BJ (cell line): ENCODE measurements at regions of chr7 and their contacts with region 1.

Region 1: GRCh38 chr7:94295850-94296249 is 98.8 kb upstream of the COL1A2 start:
- DNase-seq: peak; percentile 60
- H3K4me3 ChIP-seq: peak overlapping the region; percentile 41
- H3K27me3 ChIP-seq: no peaks in the 10 kb centered on the region
- CTCF ChIP-seq: peak; percentile 75

Region 2: DNA sequence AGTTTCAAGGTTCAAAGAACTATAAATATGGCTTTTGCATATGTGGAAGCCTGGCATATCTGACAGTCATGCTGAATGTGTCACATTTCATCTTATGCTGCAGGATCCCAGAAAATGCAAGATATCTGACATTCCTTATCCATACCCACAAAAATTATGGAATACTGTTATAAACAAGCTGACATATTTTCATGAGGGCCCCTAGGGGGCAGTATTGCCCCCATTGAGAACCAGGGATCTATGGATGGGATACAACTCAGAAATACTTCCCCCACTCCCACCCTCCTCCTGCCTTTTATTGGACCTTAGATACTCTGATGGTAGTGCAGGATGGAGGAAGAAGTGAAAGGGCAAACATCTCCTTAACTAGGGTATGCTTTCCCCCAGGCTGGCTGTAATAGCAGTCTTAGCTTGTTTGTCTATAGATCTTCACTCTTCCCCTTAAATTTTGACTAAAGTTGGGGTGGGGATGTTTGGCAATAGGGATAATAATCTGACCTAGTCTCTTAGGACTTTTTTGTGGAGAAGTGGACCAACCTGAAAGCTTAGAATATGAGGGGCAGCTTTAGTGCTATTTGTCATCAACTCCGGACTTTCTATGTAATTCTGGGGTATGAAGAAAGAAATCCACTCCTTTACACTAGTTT is 392.9 kb before region 1 on chr7:
- CTCF ChIA-PET with region 1: interaction called, 3 read pairs
- POLR2A ChIA-PET with region 1: interaction called, 10 read pairs
- DNase-seq: no peak
- H3K4me3 ChIP-seq: no peak overlapping the region
- H3K27me3 ChIP-seq: no peaks in the 10 kb centered on the region
- CTCF ChIP-seq: peak; percentile 88

Region 3: GRCh38 chr7:94190599-94191061 is 105.2 kb before region 1 on chr7:
- CTCF ChIA-PET with region 1: no interaction called
- POLR2A ChIA-PET with region 1: no interaction called
- DNase-seq: peak; percentile 88
- H3K4me3 ChIP-seq: no peak overlapping the region
- H3K27me3 ChIP-seq: no peaks in the 10 kb centered on the region
- CTCF ChIP-seq: no peak

Region 4: GRCh38 chr7:94368371-94368791 is 72.5 kb after region 1 on chr7:
- CTCF ChIA-PET with region 1: interaction called, 45 read pairs
- POLR2A ChIA-PET with region 1: interaction called, 57 read pairs
- DNase-seq: peak; percentile 74
- H3K4me3 ChIP-seq: peak overlapping the region; percentile 29
- H3K27me3 ChIP-seq: no peaks in the 10 kb centered on the region
- CTCF ChIP-seq: no peak

Region 5: GRCh38 chr7:94395141-94396036 is 99.5 kb after region 1 on chr7:
- CTCF ChIA-PET with region 1: interaction called, 87 read pairs
- POLR2A ChIA-PET with region 1: interaction called, 166 read pairs
- DNase-seq: no peak
- H3K4me3 ChIP-seq: peak overlapping the region; percentile 67
- H3K27me3 ChIP-seq: no peaks in the 10 kb centered on the region
- CTCF ChIP-seq: peak; percentile 66

Region 6: GRCh38 chr7:94414481-94414880 is 118.6 kb after region 1 on chr7:
- CTCF ChIA-PET with region 1: interaction called, 28 read pairs
- POLR2A ChIA-PET with region 1: interaction called, 13 read pairs
- DNase-seq: no peak
- H3K4me3 ChIP-seq: no peak overlapping the region
- H3K27me3 ChIP-seq: no peaks in the 10 kb centered on the region
- CTCF ChIP-seq: no peak

Region 7: DNA sequence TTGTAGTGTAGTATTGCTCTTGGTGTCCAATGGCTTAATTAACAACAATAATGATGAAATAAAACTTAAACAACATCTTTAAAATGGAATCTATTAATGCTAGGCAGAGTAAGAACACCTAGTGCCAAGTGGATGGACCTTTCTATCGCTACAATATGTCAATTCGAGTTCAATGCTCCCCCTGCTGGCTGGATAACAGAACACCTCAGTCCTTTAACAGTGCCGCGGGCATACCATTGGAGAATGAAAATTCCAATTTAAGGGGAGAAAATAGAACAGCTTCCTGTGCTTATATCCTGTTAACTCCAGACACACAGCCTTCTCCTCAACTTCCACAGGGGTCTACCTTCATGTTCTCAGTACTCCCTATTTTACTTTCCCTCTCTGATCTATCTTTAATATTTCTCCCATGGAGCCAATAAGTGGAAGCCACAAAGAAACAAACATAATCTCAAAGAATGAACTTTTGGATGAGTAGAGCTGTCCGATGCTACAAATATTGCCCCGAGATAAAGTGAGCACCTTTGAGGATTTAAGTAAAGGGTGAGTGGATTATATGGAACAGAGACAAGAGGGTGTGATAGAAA is 140.3 kb after region 1 on chr7:
- CTCF ChIA-PET with region 1: interaction called, 405 read pairs
- POLR2A ChIA-PET with region 1: interaction called, 35 read pairs
- DNase-seq: no peak
- H3K4me3 ChIP-seq: no peak overlapping the region
- H3K27me3 ChIP-seq: no peaks in the 10 kb centered on the region
- CTCF ChIP-seq: peak; percentile 79